Ascending aorta (tissue), 2 donors: ENCODE measurements at regions of chr4 and their contacts with region 1.

Region 1: DNA sequence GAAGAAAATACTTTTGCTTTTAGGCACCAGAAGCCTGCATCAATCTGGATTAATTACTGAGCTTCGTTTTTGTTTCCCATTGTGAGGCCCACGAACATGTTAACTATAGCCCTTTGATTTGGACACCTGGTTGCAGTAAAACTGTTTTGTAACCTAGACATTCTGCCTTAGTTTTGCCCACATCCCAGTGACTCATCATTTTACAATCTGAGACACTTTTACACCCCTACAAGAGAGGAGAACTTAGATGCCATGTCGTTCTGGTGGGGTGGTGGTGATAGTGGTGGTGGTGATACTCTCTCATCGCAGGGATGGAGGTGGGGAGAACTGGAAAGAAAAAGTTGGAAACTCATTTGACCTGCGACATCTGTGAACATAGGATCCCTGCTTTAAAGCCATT is 1257.2 kb downstream of the ADGRL3 start:
- DNase-seq: no peak
- H3K4me3 ChIP-seq: no peak overlapping the region
- H3K27ac ChIP-seq: no peak overlapping the region
- H3K4me1 ChIP-seq: no peaks in the 10 kb centered on the region
- H3K27me3 ChIP-seq: no peaks in the 10 kb centered on the region
- CTCF ChIP-seq: no peak

Region 2: GRCh38 chr4:62517716-62518115 is 60.4 kb after region 1 on chr4:
- intact Hi-C with region 1: loop called (anchors 10 kb)
- DNase-seq: no peak
- H3K4me3 ChIP-seq: no peak overlapping the region
- H3K27ac ChIP-seq: no peak overlapping the region
- H3K4me1 ChIP-seq: no peaks in the 10 kb centered on the region
- H3K27me3 ChIP-seq: no peaks in the 10 kb centered on the region
- CTCF ChIP-seq: no peak